ENCODE measurements at regions of chr12 and their contacts with region 1.

Region 1: DNA sequence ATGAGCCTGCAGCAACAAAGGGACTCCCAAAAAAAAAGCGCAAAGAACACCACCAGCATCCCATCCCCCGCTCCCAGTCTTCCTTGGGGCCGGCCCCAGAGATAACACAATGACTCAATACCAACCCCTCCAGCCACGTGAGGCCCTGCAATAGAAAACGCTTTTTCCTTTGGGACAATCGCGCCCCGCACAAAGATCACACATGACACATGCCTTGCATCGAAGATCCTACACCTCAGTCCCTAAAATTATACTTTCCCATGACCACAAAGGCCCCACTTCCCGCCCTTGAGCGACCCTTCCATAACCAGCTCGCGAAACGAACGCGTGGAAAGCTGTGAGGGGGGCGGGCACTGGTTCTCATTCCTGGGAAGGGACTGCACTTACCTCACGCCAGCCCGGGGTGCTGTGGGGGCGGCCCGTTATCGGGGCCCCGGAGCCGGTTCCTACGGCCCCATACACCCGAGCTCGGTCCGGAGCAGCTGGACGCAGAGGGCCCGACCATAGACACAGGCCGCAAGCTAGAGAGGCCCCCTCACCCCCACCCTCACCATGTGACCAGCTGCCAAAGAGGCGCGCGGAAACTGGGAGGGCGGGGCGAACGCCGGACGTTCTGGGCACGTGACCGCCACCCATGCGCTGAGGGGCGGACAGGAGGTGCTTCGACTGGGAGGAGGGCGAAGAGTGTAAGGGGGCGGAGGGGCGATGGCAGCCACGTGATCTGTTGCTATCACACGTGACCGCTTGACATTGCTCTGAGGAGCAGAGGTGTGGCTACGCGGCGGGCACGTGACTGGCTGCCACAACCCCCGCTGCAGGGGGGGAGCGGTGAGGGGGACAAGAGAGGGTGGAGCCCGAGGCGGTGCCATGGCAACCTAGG is at the start of gene CDK4:
- H3K4me3 Mint-ChIP-seq: peak within 1 kb of the TSS; percentile 81
- H3K27ac Mint-ChIP-seq: peak within 1 kb of the TSS; percentile 83
- H3K4me1 Mint-ChIP-seq: peaks cover 64% of the 10 kb centered on the region
- H3K27me3 Mint-ChIP-seq: peaks cover 7% of the 10 kb centered on the region

Region 2: DNA sequence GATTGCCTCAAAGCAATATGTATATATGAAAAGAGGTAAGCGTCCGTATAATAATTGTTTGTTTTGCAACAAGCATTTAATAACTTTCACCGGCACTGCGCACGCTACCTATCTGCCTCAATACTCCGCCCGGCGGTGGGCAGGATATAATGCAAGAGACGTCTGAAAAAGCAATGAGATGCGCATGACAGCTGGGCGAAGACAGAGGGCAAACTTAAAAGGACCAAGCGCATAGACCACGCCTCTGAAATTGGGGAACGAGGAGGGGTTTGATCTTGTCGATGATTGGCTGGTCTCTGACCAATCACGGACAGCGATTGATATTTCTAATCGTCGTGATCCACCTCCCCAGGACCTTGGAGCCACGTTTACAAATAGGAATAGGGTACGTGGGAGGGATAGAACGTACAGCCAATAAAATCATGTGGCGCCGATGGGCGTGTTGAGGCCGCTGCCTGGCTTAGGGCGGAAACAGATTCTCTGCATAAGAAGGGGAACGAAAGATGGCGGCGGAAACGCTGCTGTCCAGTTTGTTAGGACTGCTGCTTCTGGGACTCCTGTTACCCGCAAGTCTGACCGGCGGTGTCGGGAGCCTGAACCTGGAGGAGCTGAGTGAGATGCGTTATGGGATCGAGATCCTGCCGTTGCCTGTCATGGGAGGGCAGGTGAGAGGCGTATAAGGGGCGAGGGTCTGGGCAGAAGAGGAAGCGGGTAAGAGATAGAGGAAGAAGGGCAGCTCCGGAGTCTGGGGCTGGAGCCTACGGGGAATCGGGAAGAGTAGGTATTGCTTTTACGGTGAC is 58.2 kb before region 1 on chr12 and contains the start of gene OS9:
- intact Hi-C with region 1: loop called (anchors 2 kb)
- H3K4me3 Mint-ChIP-seq: no peak within 1 kb of the TSS
- H3K27ac Mint-ChIP-seq: no peak within 1 kb of the TSS
- H3K4me1 Mint-ChIP-seq: peaks cover 14% of the 10 kb centered on the region
- H3K27me3 Mint-ChIP-seq: peaks cover 14% of the 10 kb centered on the region

Region 3: DNA sequence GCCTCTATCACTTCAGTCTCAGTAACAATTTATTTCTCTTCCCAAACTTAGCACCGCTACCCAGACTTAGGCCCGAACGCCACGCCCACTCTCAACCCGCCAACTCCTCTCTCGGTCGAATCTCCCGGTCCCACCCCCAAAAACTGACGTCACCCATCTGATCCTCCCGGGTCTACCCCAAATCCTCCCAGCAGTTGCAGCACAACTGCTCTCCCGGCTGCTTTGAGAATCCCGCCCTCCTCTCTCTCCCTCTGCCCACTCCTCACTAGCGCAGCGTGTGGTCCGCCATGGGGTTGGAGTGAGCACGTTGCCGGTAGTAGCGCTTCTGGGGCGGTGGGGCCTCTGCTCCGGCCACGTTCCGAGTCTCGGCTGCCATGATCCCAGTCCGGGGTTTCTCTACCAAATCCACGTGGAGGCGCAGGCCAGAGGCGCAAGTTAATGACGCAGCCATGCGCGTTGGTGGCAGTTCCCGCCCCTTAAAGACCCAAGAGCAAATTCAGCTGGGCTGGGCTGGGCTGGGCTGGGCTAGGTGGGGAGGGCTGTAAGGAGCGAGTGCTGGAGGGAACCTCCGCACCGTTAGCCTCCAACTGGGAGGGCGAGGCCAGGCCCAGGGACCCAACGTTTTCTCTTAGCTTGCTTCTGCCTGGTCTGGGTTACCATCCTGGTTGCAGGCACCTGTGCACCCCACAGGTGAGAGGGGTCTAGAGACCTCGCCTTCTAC is 19.8 kb after region 1 on chr12 and contains the start of gene METTL1:
- intact Hi-C with region 1: loop called (anchors 2 kb)
- H3K4me3 Mint-ChIP-seq: peak within 1 kb of the TSS; percentile 92
- H3K27ac Mint-ChIP-seq: peak within 1 kb of the TSS; percentile 92
- H3K4me1 Mint-ChIP-seq: peaks cover 81% of the 10 kb centered on the region
- H3K27me3 Mint-ChIP-seq: peaks cover 14% of the 10 kb centered on the region

Region 4: DNA sequence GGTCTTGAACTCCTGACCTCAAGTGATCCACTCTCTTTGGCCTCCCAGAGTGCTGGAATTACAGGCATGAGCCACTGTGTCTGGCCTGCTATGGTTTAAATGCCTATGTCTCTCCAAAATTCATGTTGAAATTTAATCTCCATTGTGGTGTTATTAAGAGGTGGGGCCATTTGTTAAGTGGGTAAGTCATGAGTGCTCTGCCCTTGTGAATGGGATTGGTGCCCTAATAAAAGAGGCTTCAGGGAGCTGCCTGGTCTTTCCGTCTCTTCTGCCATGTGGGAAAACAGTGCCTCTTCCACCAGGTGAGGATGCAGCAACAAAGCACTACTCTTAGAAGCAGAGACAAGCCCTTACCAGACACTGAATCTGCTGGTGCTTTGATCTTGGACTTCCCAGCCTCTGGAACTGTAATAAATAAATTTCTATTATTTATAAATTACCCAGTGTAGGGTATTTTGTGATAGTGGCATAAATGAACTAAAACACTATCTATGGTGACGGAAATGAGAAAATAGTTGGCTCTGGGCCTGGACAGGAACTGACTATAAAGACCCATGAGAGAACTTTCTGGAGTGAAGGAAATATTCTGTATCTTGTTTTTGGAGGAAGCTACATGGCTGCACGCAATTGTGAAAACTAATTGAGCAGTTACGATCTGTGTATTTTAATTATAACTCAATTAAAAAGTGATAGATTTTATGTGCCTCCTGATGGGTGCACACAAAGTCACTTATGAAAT is 177.2 kb after region 1 on chr12:
- intact Hi-C with region 1: no loop called
- H3K4me3 Mint-ChIP-seq: no peak overlapping the region
- H3K27ac Mint-ChIP-seq: no peak overlapping the region
- H3K4me1 Mint-ChIP-seq: peaks cover 2% of the 10 kb centered on the region
- H3K27me3 Mint-ChIP-seq: no peaks in the 10 kb centered on the region